HepG2 (cell line): ENCODE measurements at regions of chr18 and their contacts with region 1.

Region 1: DNA sequence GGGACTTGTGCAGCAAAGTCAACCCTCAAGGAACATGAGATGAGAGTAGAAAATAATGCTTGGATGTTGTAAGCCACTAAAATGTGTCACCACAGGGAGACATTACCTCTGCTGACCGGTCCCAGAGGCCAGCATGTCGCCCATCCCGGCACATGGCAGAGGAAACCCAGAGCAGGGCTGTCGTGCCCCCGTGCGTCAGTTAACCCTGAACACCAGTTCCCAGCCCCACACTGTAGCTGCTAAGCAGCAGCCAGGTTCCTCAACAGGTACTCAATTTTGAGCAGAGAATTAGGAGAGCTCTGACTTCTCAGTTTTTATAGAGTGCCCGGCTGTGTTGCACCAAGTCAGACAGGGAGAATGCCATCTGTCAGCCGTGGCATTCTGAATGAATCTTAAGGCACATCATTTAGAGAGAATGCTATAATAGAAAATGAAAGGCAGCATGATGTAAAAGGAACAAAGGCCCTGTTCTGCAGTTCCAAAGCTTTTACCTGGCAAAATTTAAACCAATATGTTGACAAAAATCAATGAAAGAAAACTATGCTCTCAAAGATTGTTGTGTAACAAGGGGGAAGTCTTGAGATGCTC is 307.9 kb downstream of the METTL4 start:
- DNase-seq: no peak
- ATAC-seq: no peak
- H3K4me3 ChIP-seq: no peak overlapping the region
- H3K27ac ChIP-seq: no peak overlapping the region
- H3K4me1 ChIP-seq: no peaks in the 10 kb centered on the region
- H3K27me3 ChIP-seq: no peaks in the 10 kb centered on the region; a peak in 1 of 5 replicates
- CTCF ChIP-seq: no peak
- EP300 ChIP-seq: no peak
- POLR2A ChIP-seq: no peak
- RAD21 ChIP-seq: no peak

Region 2: DNA sequence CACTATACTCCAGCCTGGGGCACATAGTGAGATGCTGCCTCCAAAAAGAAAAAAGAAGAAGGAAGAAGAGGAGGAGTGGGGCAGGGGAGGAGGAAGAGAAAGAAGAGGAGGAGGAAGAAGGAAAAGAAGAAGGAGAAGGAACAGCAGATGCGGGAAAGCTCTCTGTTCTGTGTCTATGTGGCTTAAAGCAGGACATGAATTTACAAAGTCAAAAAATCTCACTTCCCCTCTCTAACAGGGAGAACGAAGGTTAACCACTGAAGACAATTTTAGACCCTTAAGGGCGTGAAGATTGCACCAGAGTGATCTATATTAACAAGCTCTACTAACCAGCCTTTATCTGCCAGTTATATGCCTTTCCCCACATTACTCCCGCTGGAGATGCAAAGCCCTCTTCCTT is 49.0 kb after region 1 on chr18:
- CTCF ChIA-PET with region 1: no interaction called
- POLR2A ChIA-PET with region 1: no interaction called
- in situ Hi-C with region 1: no loop called
- intact Hi-C with region 1: loop called (anchors 10 kb)
- DNase-seq: no peak
- ATAC-seq: no peak
- H3K4me3 ChIP-seq: no peak overlapping the region
- H3K27ac ChIP-seq: no peak overlapping the region
- H3K4me1 ChIP-seq: peaks cover 12% of the 10 kb centered on the region
- H3K27me3 ChIP-seq: no peaks in the 10 kb centered on the region; a peak in 1 of 5 replicates
- CTCF ChIP-seq: no peak
- EP300 ChIP-seq: no peak
- POLR2A ChIP-seq: no peak
- RAD21 ChIP-seq: no peak

Region 3: DNA sequence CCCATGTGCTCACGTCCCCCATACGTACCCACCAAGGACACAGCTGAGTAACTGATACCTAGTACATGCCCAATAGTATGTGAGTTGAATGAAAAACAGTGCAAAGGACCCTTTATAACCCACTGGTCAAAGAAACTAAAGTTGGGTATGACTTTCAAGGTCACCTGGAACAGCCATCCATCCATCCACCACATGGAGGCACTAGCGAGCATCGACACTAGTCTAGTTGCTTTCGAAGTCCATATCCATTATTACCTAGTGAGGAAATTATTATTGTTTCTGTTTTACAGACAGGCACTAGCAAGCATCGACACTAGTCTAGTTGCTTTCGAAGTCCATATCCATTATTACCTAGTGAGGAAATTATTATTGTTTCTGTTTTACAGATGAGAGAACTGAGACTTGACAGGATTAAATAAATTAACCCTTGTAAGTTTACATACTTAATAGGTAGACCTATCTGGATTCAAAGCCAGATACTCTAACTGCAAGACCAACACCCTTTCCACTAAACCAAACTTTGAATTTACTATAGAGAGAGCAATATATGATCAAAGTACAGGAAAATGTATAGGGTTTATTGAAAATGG is 74.2 kb after region 1 on chr18:
- CTCF ChIA-PET with region 1: no interaction called
- POLR2A ChIA-PET with region 1: no interaction called
- in situ Hi-C with region 1: no loop called
- intact Hi-C with region 1: no loop called
- DNase-seq: peak; percentile 17
- ATAC-seq: peak; percentile 57
- H3K4me3 ChIP-seq: no peak overlapping the region
- H3K27ac ChIP-seq: no peak overlapping the region
- H3K4me1 ChIP-seq: no peaks in the 10 kb centered on the region
- H3K27me3 ChIP-seq: no peaks in the 10 kb centered on the region
- CTCF ChIP-seq: peak; percentile 54
- EP300 ChIP-seq: no peak
- POLR2A ChIP-seq: no peak
- RAD21 ChIP-seq: no peak